ENCODE measurements at regions of chr19 and their contacts with region 1.

Region 1: DNA sequence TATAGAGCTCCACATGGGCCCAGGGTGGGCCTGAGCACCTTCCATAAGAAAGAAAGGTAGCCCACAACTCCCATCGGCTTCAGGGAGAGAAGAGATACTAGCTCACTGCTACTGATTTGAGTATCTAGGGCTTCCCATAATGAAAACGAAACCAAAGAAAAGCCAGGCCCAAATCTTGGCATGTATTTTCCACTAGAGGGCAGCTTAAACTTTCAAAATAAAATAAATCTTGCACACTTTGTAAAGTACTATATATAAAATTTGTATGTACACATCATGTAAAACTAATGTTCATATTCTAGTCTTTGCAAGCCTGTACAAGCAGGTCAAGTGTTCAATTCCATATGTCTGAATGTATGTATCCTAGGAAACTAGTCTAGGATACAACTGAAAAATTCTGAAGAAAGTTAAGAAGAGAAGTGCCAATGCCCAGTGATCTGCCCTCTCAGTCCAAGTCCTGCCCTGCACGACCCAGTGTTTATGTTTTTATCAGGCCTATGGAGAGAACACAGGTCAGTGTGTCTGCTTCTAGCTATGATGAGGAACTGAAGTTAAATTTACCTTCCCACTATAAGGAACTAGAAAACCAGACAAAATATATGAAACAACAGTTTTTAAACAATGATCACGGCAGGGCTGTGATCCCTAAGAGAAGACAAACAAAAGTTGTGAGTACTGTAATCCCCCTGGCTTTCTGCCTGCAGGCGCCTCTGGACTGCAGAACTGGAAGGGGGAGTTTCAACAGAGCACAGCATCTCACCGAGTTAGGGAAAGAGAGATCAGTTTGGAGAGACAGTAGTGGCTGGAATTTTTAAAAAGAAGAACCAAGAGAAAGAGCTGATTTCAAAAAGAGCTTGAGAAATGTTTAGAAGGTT is 475.7 kb downstream of the UQCRFS1 start:
- DNase-seq: peak; percentile 75
- H3K4me3 ChIP-seq: peak overlapping the region; percentile 53
- H3K27ac ChIP-seq: no peak overlapping the region
- H3K4me1 ChIP-seq: peaks cover 5% of the 10 kb centered on the region; the same call in 1 of the 2 replicates
- H3K27me3 ChIP-seq: no peaks in the 10 kb centered on the region

Region 2: GRCh38 chr19:28980236-28980868 is 243.1 kb after region 1 on chr19:
- in situ Hi-C with region 1: loop called (anchors 25 kb)
- DNase-seq: peak; percentile 68
- H3K4me3 ChIP-seq: no peak overlapping the region
- H3K27ac ChIP-seq: no peak overlapping the region
- H3K4me1 ChIP-seq: no peaks in the 10 kb centered on the region
- H3K27me3 ChIP-seq: no peaks in the 10 kb centered on the region

Region 3: DNA sequence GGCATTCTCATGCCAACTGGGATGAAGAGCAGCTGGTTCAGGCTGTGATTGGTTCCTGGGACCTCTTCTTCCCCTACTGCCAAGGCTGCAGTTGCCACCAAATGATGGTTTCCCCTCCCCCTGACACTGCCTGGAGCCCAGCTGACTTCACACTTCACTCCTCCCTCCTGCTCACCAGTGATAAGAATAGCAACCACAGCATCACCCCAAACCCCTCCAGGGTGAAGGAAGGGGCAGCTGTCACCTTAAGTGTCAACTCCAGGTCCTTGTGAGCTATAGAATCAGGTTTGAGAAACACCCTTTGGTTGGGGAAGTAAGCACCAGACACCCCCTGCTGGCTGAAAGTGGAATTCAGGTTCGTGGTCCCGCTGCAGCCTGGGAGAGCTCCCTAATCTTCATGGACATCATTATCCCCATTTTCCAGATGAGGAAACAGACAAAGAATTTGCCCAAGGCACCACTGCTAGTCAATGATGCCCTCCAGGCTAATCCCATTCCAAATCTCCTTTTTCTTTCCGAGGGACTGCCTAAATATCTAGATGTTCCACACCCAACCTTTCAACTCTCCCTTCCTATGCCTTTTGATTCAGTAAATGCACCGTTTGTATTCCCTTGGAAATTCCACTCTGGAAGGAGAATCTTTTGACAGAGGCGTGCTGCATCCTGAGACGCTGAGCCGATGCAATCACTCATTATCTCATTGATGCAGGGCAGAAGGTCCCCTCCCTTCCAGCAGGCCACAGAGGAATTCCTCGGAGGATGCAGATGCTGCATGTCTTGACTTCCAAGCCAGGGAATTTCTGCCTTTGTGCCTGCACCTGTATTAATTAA is 526.3 kb after region 1 on chr19:
- in situ Hi-C with region 1: loop called (anchors 25 kb)
- DNase-seq: peak; percentile 55
- H3K4me3 ChIP-seq: no peak overlapping the region
- H3K27ac ChIP-seq: no peak overlapping the region
- H3K4me1 ChIP-seq: no peaks in the 10 kb centered on the region
- H3K27me3 ChIP-seq: no peaks in the 10 kb centered on the region; the same call in 1 of the 2 replicates